Ascending aorta (tissue), 2 donors: ENCODE measurements at regions of chr5 and their contacts with region 1.

Region 1: GRCh38 chr5:6712577-6713275 is 506 bp upstream of the TENT4A start:
- DNase-seq: peak; percentile 88 to 98
- H3K4me3 ChIP-seq: peak overlapping the region; percentile 79 to 93
- H3K27ac ChIP-seq: peak overlapping the region; percentile 97 to 99
- H3K4me1 ChIP-seq: peaks cover 6 to 36% of the 10 kb centered on the region in 2 donors
- H3K27me3 ChIP-seq: no peaks in the 10 kb centered on the region
- CTCF ChIP-seq: no peak

Region 2: DNA sequence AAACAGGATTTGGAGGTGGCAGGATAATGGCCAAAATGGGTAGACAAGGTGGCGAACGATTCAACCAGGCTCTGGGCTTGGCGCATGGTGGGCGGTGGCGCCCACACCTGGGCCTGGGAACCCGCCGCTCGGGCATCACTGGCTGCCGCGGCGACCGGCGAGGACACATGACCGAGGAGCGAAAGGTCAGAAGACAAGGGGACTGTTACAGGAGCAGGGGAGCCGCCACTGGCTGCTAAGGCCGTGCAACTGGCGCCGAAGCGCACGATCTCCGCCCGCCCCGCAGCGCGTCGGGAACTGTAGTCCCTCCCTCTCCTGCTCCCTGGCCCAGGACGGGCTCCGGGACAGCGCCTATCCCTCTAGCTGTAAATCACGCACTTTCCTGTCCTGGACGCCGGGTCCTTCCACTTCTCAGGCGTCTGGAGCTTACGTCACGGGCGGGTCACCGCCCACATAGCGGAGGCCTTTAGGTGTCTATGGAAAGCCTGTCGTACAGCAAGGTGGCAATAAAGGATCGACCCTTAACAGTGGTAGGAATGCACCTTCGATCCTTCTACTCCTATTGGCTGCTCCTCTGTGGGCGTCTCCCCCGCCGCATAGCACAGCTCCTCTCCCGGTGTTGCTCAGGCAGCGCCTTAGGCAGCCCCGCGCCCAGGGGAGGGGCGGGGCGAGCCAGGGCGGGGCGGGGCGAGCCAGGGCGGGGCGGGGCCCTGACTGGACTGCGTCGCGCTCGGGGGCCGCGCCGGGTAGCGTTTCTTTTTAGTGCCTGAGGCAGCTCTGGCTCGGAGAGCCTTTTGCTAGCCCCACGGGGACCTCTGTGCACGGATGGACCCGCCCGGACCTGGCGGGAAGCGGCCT is 1290.5 kb before region 1 on chr5 and contains the start of gene ICE1:
- intact Hi-C with region 1: loop called (anchors 2 kb)
- DNase-seq: peak; percentile 95 to 99
- H3K4me3 ChIP-seq: peak within 1 kb of the TSS; percentile 84 to 99
- H3K27ac ChIP-seq: peak within 1 kb of the TSS; percentile 94 to 95
- H3K4me1 ChIP-seq: peaks cover 15 to 27% of the 10 kb centered on the region in 2 donors
- H3K27me3 ChIP-seq: no peaks in the 10 kb centered on the region
- CTCF ChIP-seq: no peak
- total RNA-seq, gene ICE1: 13.5 TPM

Region 3: DNA sequence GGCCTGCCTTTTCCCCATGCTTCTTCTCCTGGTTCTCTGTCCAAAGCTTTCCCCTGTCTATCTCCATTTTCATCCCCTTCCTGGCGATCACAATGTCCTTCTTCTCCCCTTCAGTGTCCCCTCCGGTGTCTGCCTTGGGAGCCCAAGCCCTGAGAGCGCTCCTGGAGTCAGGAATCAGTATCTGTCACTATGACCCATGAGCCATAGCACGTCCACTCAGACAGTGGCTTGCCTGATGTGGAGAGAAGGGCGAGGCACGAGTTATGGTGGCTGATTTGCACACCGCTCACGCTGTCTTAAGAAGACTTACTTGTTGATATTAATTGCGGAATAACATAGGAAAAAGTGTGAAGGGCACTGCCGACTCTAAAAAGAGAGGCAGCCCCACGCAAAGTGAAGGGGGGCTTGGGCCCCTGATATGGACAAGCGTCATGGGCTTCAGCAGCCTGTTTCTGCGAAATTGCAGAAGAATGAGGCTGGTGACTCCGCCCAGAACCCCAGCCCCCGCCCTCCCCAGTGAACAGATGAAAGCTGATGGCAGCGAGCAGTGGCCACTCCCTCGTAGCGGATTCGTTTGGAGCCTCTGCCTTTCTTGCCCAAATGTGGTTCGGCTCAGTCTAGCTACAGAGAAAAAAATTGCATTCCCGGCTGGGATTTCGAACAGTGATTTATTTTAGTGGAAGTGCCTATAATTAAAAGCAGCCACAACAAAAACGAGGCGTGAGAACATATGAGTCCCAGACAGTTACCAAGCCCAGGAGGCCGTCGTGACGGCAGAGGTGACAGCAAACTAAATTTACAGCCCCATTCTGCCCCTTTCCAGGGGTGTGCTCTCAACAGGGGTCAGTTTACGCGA is 1140.5 kb before region 1 on chr5:
- intact Hi-C with region 1: loop called (anchors 10 kb)
- DNase-seq: peak; percentile 51 to 91
- H3K4me3 ChIP-seq: peak overlapping the region; percentile 1 to 49
- H3K27ac ChIP-seq: peak overlapping the region; percentile 81 to 84
- H3K4me1 ChIP-seq: peaks cover 8 to 24% of the 10 kb centered on the region in 2 donors
- H3K27me3 ChIP-seq: no peaks in the 10 kb centered on the region
- CTCF ChIP-seq: no peak

Region 4: GRCh38 chr5:6454628-6455053 is 258.1 kb before region 1 on chr5:
- intact Hi-C with region 1: loop called (anchors 2 kb)
- DNase-seq: peak in 1 of 2 donors; percentile 79
- H3K4me3 ChIP-seq: peak overlapping the region in 1 of 2 donors; percentile 42
- H3K27ac ChIP-seq: peak overlapping the region; percentile 50 to 71
- H3K4me1 ChIP-seq: peaks cover 0 to 26% of the 10 kb centered on the region in 2 donors
- H3K27me3 ChIP-seq: no peaks in the 10 kb centered on the region
- CTCF ChIP-seq: no peak

Region 5: DNA sequence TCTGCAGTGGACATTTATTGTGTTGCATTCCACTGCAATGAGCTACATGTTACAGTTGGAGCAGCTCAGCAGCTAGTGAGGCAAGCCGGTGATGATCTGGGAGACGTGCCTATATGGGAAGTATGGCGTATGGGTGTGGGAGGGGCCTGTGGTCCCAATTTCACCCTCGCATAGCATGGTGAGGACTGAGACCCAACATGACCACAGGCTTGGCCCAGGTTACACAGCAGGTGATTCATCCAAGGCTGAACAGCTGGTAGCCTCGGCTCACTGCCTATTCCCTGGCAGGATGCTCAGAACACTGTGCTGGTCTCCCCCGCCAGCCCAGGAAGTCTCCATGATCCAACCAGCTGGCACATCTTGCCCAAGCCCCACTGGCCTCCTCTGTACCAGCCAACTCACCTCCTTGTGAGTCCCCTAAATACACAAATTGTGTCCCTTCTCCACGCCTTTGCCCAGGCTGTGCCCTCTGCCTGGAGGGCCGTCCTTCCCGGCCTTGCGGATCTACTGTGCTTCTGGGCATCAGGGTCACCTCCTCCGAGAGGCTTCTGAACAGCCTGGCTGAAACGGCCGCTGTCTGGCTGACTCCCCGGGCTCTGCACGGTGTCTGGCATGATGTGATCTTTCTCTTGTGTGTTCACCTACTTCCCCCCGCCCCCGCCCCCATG is 161.3 kb before region 1 on chr5:
- intact Hi-C with region 1: no loop called
- DNase-seq: peak; percentile 81 to 85
- H3K4me3 ChIP-seq: peak overlapping the region in 1 of 2 donors; percentile 2
- H3K27ac ChIP-seq: peak overlapping the region; percentile 64 to 73
- H3K4me1 ChIP-seq: peaks cover 0 to 15% of the 10 kb centered on the region in 2 donors
- H3K27me3 ChIP-seq: no peaks in the 10 kb centered on the region
- CTCF ChIP-seq: no peak

Region 6: DNA sequence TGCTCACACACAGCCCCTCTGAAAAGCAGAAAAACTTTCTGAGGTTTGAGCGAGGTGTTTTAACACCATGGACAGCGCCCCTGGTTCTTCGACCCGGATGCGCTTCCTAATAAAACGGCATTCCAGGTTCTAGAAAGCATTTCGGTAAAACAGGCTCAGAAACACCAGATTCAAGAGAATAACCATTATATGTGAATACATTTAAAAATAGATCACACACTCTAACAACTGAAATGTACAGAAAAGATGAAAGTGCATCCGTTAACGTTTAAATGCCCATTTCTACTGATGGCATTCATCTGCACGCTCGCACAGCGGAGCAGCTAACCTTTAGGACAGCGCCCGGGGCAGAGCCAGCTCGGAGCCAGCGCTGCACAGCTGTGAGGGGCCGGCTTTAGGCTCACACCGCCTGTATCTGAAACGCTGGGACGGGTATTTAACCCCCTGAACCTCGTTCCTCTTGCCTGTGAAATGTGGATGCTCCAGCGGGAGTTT is 25.8 kb before region 1 on chr5:
- intact Hi-C with region 1: loop called (anchors 2 kb)
- DNase-seq: no peak
- H3K4me3 ChIP-seq: peak overlapping the region; percentile 33 to 40
- H3K27ac ChIP-seq: no peak overlapping the region
- H3K4me1 ChIP-seq: peaks cover 0 to 2% of the 10 kb centered on the region in 2 donors
- H3K27me3 ChIP-seq: no peaks in the 10 kb centered on the region
- CTCF ChIP-seq: no peak

Region 7: DNA sequence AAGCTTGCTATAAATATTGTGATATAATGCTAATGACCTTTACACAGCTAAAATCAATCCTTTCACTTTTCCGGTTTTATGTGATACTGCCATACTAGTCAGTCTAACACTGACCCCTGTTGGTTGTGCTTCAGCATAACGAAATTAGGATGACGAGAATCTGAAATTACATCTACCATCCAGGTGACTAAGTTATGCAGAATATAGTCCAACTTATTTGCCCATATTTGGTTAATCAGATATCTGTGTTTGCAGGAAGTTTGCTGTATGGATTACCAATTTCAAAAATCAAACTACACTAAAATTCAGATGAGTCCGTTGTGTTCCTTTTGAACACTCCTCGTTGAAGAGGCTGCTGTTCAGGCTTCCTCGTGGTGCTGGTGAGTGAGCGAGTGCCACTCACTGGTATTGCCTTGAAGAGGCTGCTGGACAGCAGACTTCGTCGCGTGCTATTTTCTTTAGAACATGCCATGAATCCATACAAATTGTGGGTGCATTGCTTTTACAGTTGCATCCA is 33.0 kb after region 1 on chr5:
- intact Hi-C with region 1: loop called (anchors 2 kb)
- DNase-seq: peak in 1 of 2 donors; percentile 61
- H3K4me3 ChIP-seq: no peak overlapping the region
- H3K27ac ChIP-seq: peak overlapping the region in 1 of 2 donors; percentile 42
- H3K4me1 ChIP-seq: peaks cover 0 to 3% of the 10 kb centered on the region in 2 donors
- H3K27me3 ChIP-seq: no peaks in the 10 kb centered on the region
- CTCF ChIP-seq: peak; percentile 66 to 77 (median 67)